H1 (cell line): ENCODE measurements at regions of chr1 and their contacts with region 1.

Region 1: GRCh38 chr1:156625436-156626078 is 6.3 kb downstream of the HAPLN2 start:
- DNase-seq: peak in 1 of 2 experiments; percentile 84
- H3K4me3 ChIP-seq: peak overlapping the region; percentile 44 to 71 (median 46)
- H3K27ac ChIP-seq: no peak overlapping the region
- H3K4me1 ChIP-seq: peaks cover 0 to 9% (median 2%) of the 10 kb centered on the region in 4 experiments; a peak in 5 of 7 replicates
- H3K27me3 ChIP-seq: peaks cover 31 to 50% (median 38%) of the 10 kb centered on the region in 4 experiments
- CTCF ChIP-seq: peak; percentile 69 to 84 (median 75)
- EP300 ChIP-seq: no peak
- POLR2A ChIP-seq: no peak
- RAD21 ChIP-seq: peak; percentile 77 to 81

Region 2: GRCh38 chr1:156608036-156608674 is 17.4 kb before region 1 on chr1:
- CTCF ChIA-PET with region 1: interaction called, 80 read pairs
- POLR2A ChIA-PET with region 1: interaction called, 5 read pairs
- DNase-seq: peak in 1 of 2 experiments; percentile 52
- H3K4me3 ChIP-seq: no peak overlapping the region
- H3K27ac ChIP-seq: no peak overlapping the region
- H3K4me1 ChIP-seq: no peaks in the 10 kb centered on the region
- H3K27me3 ChIP-seq: no peaks in the 10 kb centered on the region
- CTCF ChIP-seq: peak; percentile 26 to 90 (median 90)
- EP300 ChIP-seq: no peak
- POLR2A ChIP-seq: no peak
- RAD21 ChIP-seq: peak; percentile 70 to 80

Region 3: DNA sequence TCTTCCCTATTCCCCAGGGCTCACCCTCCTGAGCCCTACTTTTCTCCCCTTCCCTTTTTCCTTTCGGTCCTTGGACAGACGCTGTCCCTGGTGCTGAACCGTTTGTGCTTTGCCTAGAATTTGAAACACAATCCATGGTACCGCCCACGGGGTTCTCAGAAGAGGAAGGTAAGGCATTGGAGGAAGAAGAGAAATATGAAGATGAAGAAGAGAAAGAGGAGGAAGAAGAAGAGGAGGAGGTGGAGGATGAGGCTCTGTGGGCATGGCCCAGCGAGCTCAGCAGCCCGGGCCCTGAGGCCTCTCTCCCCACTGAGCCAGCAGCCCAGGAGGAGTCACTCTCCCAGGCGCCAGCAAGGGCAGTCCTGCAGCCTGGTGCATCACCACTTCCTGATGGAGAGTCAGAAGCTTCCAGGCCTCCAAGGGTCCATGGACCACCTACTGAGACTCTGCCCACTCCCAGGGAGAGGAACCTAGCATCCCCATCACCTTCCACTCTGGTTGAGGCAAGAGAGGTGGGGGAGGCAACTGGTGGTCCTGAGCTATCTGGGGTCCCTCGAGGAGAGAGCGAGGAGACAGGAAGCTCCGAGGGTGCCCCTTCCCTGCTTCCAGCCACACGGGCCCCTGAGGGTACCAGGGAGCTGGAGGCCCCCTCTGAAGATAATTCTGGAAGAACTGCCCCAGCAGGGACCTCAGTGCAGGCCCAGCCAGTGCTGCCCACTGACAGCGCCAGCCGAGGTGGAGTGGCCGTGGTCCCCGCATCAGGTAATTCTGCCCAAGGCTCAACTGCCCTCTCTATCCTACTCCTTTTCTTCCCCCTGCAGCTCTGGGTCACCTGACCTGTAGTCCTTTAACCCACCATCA is 26.8 kb after region 1 on chr1:
- CTCF ChIA-PET with region 1: interaction called, 789 read pairs
- POLR2A ChIA-PET with region 1: interaction called, 15 read pairs
- DNase-seq: peak in 1 of 2 experiments; percentile 92
- H3K4me3 ChIP-seq: no peak overlapping the region
- H3K27ac ChIP-seq: no peak overlapping the region
- H3K4me1 ChIP-seq: peaks cover 2 to 9% (median 4%) of the 10 kb centered on the region in 4 experiments; a peak in 6 of 7 replicates
- H3K27me3 ChIP-seq: peaks cover 2 to 32% (median 26%) of the 10 kb centered on the region in 4 experiments
- CTCF ChIP-seq: no peak
- EP300 ChIP-seq: no peak
- POLR2A ChIP-seq: no peak
- RAD21 ChIP-seq: no peak

Region 4: GRCh38 chr1:156677616-156678596 is 52.3 kb after region 1 on chr1:
- CTCF ChIA-PET with region 1: interaction called, 868 read pairs
- POLR2A ChIA-PET with region 1: interaction called, 46 read pairs
- DNase-seq: peak in 1 of 2 experiments; percentile 74
- H3K4me3 ChIP-seq: peak overlapping the region; percentile 64 to 84 (median 74); a peak in 5 of 8 replicates
- H3K27ac ChIP-seq: no peak overlapping the region
- H3K4me1 ChIP-seq: peaks cover 7 to 37% (median 30%) of the 10 kb centered on the region in 4 experiments
- H3K27me3 ChIP-seq: no peaks in the 10 kb centered on the region; a peak in 2 of 7 replicates
- CTCF ChIP-seq: peak in 2 of 3 experiments; percentile 92 to 97; a peak in 3 of 4 replicates
- EP300 ChIP-seq: no peak
- POLR2A ChIP-seq: no peak
- RAD21 ChIP-seq: peak; percentile 89 to 95

Region 5: DNA sequence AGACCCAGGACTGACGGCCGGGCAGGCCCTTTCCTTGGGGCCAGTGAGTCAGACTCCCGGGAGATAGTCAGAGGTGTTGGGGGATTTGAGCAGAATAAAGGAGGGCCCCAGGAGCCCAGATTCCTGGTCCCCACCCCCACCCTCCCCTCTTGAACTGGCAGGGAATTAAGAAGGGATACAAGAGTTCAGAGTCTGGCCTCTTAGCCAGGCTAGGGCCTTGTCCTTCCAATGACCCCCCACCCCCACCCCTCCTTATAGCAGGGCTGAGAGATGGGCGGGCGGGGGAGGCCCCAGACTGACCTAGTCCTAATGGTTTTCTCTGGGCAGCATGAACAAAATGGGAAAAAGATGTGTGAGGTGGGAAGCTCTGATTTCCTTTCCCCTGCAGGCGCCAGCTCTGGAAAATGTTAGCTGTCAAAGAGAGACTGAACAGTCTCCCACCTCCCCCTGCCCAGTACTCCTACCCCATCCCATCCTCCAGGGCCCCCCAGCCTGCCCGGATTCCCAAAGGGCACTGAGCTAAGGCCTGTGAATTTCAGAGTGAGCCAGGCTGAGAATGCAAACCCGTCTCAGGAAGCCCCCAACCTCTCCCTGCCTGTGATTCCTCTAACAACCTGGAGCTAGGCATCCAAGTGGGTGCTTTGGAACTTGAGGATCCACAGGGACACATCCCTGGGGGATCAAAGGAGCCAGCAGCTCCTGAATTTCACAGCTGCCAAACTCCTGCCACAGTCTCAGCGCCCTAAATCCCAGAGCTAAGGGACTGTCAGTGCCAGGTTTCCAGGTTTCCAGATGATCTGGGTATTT is 85.7 kb after region 1 on chr1:
- CTCF ChIA-PET with region 1: interaction called, 42 read pairs
- POLR2A ChIA-PET with region 1: interaction called, 3 read pairs
- DNase-seq: peak in 1 of 2 experiments; percentile 51
- H3K4me3 ChIP-seq: peak overlapping the region in 2 of 4 experiments; percentile 2 to 18; a peak in 3 of 8 replicates
- H3K27ac ChIP-seq: no peak overlapping the region
- H3K4me1 ChIP-seq: peaks cover 18 to 48% (median 37%) of the 10 kb centered on the region in 4 experiments
- H3K27me3 ChIP-seq: no peaks in the 10 kb centered on the region
- CTCF ChIP-seq: no peak
- EP300 ChIP-seq: no peak
- POLR2A ChIP-seq: no peak
- RAD21 ChIP-seq: no peak; a peak in 1 of 4 replicates

Region 6: DNA sequence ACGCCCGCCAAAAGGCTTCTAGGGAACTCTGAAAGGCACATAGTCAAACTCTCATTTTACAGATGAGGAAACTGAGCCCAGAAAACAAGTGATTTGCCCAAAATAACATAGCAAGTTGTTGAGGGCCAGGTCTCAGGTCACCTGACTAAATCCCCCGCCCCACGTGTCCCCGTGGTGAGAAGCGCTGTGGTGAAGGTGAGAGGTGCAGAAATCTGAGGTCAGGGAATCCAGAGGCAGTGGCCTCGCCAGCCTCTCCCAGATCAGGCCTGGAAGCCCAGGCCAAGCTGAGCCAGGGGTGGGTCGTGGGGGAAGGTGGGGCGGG is 120.8 kb after region 1 on chr1:
- CTCF ChIA-PET with region 1: no interaction called
- POLR2A ChIA-PET with region 1: no interaction called
- DNase-seq: no peak
- H3K4me3 ChIP-seq: peak overlapping the region; percentile 52 to 100 (median 64)
- H3K27ac ChIP-seq: peak overlapping the region; percentile 100
- H3K4me1 ChIP-seq: peaks cover 32 to 50% (median 34%) of the 10 kb centered on the region in 4 experiments
- H3K27me3 ChIP-seq: no peaks in the 10 kb centered on the region
- CTCF ChIP-seq: no peak
- EP300 ChIP-seq: no peak
- POLR2A ChIP-seq: no peak
- RAD21 ChIP-seq: no peak

Region 7: DNA sequence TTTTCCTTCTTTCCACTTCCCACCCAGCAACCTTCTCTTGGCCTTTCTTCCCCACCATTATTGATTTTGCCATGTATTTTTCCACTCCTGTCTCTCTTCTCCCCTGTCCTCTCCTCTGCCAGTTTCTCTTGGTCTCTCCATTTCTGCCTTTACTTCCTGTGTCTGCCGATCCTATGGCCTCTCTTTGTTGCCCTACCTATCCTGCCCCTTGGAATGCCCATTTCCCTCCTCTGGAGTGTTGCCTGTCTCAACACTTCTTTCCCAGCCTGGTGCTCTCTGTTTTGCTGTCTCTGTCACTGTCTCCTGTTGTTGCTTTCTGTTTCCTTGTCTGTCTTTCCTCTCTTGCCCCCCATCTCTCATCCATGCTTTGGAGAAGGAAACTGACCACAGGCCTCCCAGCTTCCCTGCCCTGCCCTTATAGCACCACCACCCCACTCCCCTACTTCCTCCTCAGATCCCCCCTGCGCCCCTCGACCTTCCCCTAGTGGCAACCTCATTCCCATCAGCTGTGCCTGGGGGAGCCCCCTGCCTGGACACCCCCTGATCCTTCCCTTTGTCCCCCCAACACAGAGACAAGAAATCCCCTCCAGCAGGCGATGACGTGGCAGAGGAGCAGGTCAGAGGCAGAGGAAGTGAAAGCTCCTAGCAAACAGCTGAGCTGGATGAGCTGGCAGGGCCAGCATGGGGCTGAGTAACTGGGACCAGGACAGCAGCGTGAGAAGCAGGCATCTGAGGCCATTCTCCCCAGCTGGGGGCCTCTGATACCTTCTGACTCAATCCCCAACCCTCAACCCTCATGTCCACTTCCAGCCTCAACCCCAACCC is 480.6 kb after region 1 on chr1:
- CTCF ChIA-PET with region 1: no interaction called
- POLR2A ChIA-PET with region 1: no interaction called
- DNase-seq: no peak
- H3K4me3 ChIP-seq: no peak overlapping the region
- H3K27ac ChIP-seq: no peak overlapping the region
- H3K4me1 ChIP-seq: peaks cover 0 to 7% (median under 1%) of the 10 kb centered on the region in 4 experiments; a peak in 4 of 7 replicates
- H3K27me3 ChIP-seq: peaks cover 0 to 3% (median 1%) of the 10 kb centered on the region in 4 experiments; a peak in 3 of 7 replicates
- CTCF ChIP-seq: no peak
- EP300 ChIP-seq: no peak
- POLR2A ChIP-seq: no peak
- RAD21 ChIP-seq: no peak